ENCODE measurements at regions of chr3 and their contacts with region 1.

Region 1: DNA sequence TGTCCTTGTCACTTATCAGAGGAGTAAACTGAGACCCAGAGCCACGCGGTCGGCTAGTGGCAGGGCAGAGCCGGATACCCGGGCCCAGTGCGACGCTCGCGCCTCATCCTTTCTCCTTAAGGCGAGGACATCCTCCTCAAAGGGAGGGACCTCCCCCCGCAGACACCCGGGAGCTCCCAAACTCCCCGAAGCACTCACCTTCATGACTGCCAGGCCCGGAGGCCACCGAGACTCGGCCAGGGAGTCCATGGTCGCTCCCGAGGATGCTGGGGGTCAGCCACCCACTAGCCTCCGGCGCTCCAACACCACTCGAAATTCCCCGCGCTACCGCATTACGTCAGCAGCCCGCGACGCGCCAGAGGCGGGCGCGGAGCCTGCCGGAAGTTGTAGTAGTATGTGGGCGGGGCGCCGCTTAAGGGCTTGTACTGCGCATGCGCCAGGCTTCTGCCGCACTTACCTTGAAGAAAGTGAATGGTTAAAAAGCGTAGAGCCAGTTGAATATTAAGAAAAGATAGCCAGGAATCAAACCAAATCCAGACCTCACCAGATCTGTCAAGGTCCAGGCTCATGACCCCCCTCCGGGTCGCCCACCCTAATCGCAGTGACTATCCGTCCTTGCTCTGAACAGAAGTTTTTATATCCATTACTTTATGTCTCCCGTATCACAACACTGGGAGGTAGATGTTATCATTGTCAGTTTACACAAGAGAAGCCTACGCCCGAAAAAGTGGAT is at the start of gene RAD18:
- DNase-seq: peak; percentile 79 to 92 (median 84)
- H3K4me3 ChIP-seq: peak within 1 kb of the TSS; percentile 51 to 99 (median 88)
- H3K27ac ChIP-seq: peak within 1 kb of the TSS in 56 of 59 donors; percentile 3 to 90 (median 70)
- H3K27me3 ChIP-seq: no peaks in the 10 kb centered on the region
- CTCF ChIP-seq: peak in 29 of 56 donors; percentile 5 to 61 (median 28)
- total RNA-seq, gene RAD18: 7.8 to 24.6 (median 13.3) TPM

Region 2: GRCh38 chr3:8769088-8769822 is 194.0 kb before region 1 on chr3 and contains the start of gene OXTR:
- intact Hi-C with region 1: loop called (anchors 5 kb)
- DNase-seq: peak in 9 of 10 donors; percentile 52 to 86 (median 61)
- H3K4me3 ChIP-seq: peak within 1 kb of the TSS in 58 of 59 donors; percentile 8 to 75 (median 53)
- H3K27ac ChIP-seq: peak within 1 kb of the TSS in 3 of 59 donors; percentile 0 to 5 (median 2)
- H3K27me3 ChIP-seq: peaks cover 0 to 54% (median 29%) of the 10 kb centered on the region in 45 donors
- CTCF ChIP-seq: peak; percentile 91 to 100 (median 98)
- total RNA-seq, gene OXTR: 1.7 to 35.3 (median 6.5) TPM

Region 3: GRCh38 chr3:9102240-9102981 is 139.1 kb after region 1 on chr3:
- intact Hi-C with region 1: no loop called
- DNase-seq: no peak
- H3K4me3 ChIP-seq: no peak overlapping the region
- H3K27ac ChIP-seq: peak overlapping the region in 21 of 59 donors; percentile 1 to 89 (median 54)
- H3K27me3 ChIP-seq: no peaks in the 10 kb centered on the region
- CTCF ChIP-seq: no peak